ENCODE measurements at regions of chr12 and their contacts with region 1.

Region 1: GRCh38 chr12:52156736-52157565 is 34.9 kb downstream of the KRT80 start:
- DNase-seq: peak; percentile 57 to 97 (median 85)

Region 2: GRCh38 chr12:51744235-51744634 is 412.7 kb before region 1 on chr12:
- intact Hi-C with region 1: no loop called
- DNase-seq: no peak

Region 3: GRCh38 chr12:52213512-52214420 is 56.8 kb after region 1 on chr12:
- intact Hi-C with region 1: loop called (anchors 2 kb)
- DNase-seq: peak in 9 of 10 donors; percentile 53 to 96 (median 74)

Region 4: DNA sequence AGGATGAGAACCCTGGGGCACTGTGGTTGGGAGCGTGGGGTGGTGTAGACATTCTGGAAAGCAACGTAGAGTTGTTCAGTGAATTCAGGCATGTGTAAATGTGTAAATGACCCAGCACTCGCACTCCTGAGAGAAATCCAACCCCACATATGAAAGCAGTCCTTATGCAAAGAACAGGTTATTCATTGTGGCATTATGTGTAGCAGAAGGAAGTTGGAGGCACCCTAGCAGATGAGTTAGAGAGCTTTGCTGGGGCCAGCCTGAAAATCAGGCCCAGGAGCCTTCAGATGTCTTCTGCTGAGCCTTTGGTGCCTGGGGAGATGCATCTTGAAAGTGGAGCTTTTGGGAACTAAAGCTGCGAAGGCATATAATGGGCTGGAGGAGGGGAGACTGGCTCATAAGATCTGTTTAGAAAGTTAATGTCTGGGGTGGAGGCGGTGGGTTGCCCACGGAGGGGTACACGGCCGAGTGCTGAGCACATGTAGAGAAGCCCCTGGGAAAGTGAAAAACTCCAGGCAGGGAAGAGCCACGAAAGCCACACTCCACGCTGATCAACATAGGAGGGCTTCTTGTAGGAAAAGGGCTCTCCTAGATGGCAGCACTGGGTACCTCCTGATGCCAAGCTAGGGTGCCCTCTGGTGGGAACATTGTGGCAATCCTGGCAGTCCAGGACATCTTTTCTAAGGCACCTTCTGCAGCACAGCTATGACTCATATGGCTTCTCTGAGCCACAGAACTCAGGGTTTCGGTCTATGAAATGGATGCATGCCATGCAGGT is 170.3 kb after region 1 on chr12:
- intact Hi-C with region 1: loop called (anchors 1 kb)
- DNase-seq: peak; percentile 56 to 97 (median 80)

Region 5: GRCh38 chr12:52879394-52880351 is 722.7 kb after region 1 on chr12:
- intact Hi-C with region 1: loop called (anchors 1 kb)
- DNase-seq: peak; percentile 52 to 95 (median 76)

Region 6: GRCh38 chr12:52980693-52981423 is 823.9 kb after region 1 on chr12:
- intact Hi-C with region 1: loop called (anchors 2 kb)
- DNase-seq: peak; percentile 69 to 97 (median 84)

Measured in posterior cingulate gyrus (tissue), 11 donors.